ENCODE measurements at regions of chr9 and their contacts with region 1.

Region 1: GRCh38 chr9:35518226-35518821 is 28.4 kb downstream of the RUSC2 start:
- DNase-seq: peak; percentile 86
- H3K4me3 ChIP-seq: no peak overlapping the region
- H3K27ac ChIP-seq: peak overlapping the region; percentile 79
- H3K4me1 ChIP-seq: peaks cover 74% of the 10 kb centered on the region
- H3K27me3 ChIP-seq: no peaks in the 10 kb centered on the region
- CTCF ChIP-seq: no peak

Region 2: GRCh38 chr9:35538361-35539234 is 20.3 kb after region 1 on chr9:
- CTCF ChIA-PET with region 1: no interaction called
- dilution Hi-C with region 1: no loop called
- in situ Hi-C with region 1: no loop called
- intact Hi-C with region 1: loop called (anchors 1 kb)
- DNase-seq: peak; percentile 37
- H3K4me3 ChIP-seq: peak overlapping the region in 2 of 3 experiments; percentile 19 to 41
- H3K27ac ChIP-seq: no peak overlapping the region
- H3K4me1 ChIP-seq: peaks cover 20% of the 10 kb centered on the region
- H3K27me3 ChIP-seq: no peaks in the 10 kb centered on the region
- CTCF ChIP-seq: no peak